A673 (cell line): ENCODE measurements at regions of chr11 and their contacts with region 1.

Region 1: DNA sequence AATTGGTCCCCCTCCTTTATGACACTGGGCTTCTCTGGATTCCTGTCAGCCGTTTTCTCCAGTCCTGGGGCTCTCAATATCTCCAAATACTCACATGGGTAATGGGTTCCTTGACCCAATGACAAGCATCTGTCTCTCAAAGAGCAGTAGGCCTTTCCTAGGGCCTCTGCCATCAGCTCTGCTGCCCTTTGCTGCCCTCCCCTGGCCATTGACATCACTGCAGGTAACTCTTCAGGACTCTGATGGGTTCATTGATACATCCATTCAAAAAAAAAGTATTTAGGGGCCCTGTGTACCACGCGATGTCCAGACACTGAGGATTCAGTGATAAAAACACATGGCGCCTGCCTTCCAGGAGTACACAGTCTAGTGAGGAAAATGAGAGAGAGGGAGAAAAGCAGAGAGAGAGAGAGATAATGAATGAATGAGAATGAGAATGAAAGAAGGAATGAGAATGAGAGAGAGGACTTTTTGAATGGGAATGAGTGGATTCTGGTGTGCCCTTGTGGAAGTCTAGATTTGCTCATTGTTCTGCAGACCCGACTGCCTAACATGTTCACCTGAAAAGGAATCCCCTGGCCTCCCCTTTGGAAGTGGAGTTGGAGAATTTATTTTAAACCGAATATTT is 42.6 kb upstream of the OLFML1 start:
- DNase-seq: peak; percentile 62
- H3K4me3 ChIP-seq: no peak overlapping the region
- H3K27ac ChIP-seq: no peak overlapping the region
- H3K4me1 ChIP-seq: no peaks in the 10 kb centered on the region
- H3K27me3 ChIP-seq: no peaks in the 10 kb centered on the region
- CTCF ChIP-seq: peak; percentile 78

Region 2: GRCh38 chr11:7098235-7098832 is 344.4 kb before region 1 on chr11:
- CTCF ChIA-PET with region 1: interaction called, 3 read pairs
- POLR2A ChIA-PET with region 1: no interaction called
- intact Hi-C with region 1: loop called (anchors 1 kb)
- DNase-seq: peak; percentile 49
- H3K4me3 ChIP-seq: no peak overlapping the region
- H3K27ac ChIP-seq: no peak overlapping the region
- H3K4me1 ChIP-seq: no peaks in the 10 kb centered on the region
- H3K27me3 ChIP-seq: peaks cover 12% of the 10 kb centered on the region
- CTCF ChIP-seq: peak; percentile 62

Region 3: DNA sequence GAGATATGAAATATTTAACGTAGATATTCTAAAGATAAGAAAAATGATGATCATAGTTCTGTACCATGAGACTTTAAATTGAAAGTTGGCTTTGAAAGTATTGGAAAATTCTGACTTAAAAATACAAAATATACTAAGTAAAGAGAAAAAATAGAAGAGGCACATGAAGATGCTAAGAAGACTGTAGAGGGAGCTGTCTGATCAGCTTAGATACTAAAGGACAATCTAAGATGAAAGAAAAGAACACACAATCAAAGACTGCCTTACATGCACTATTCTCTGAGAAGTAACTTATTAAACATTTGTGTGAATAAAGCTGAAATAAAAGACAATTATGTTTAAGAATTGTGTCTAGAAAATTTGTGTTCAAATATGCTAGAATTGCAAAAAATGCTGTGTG is 298.8 kb before region 1 on chr11:
- CTCF ChIA-PET with region 1: no interaction called
- POLR2A ChIA-PET with region 1: no interaction called
- intact Hi-C with region 1: loop called (anchors 5 kb)
- DNase-seq: peak; percentile 8
- H3K4me3 ChIP-seq: no peak overlapping the region
- H3K27ac ChIP-seq: no peak overlapping the region
- H3K4me1 ChIP-seq: no peaks in the 10 kb centered on the region
- H3K27me3 ChIP-seq: peaks cover 4% of the 10 kb centered on the region
- CTCF ChIP-seq: peak; percentile 43

Region 4: DNA sequence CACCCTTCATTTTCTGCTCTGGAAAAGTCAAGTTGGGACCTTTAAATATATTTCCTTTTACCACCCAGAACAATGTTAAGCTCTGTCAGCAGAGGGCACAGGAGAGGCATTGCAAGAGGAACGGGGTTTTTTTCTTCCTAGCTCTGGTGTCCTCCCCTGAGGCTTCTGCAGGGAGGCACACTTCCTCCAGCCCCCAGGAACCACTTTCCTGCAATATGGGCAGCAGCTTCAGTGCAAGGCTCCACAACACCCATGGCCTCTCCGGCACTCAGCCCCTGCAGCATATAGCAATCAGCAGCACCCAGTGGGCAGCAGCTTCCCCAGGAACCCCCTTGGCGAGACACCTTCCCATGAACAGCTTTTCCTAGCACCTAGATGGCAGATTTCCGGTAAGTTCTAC is 89.6 kb before region 1 on chr11:
- CTCF ChIA-PET with region 1: interaction called, 3 read pairs
- POLR2A ChIA-PET with region 1: no interaction called
- intact Hi-C with region 1: loop called (anchors 5 kb)
- DNase-seq: peak; percentile 40
- H3K4me3 ChIP-seq: no peak overlapping the region
- H3K27ac ChIP-seq: no peak overlapping the region
- H3K4me1 ChIP-seq: no peaks in the 10 kb centered on the region
- H3K27me3 ChIP-seq: no peaks in the 10 kb centered on the region
- CTCF ChIP-seq: peak; percentile 50

Region 5: GRCh38 chr11:7672960-7673723 is 230.4 kb after region 1 on chr11 and contains the start of gene CYB5R2:
- CTCF ChIA-PET with region 1: no interaction called
- POLR2A ChIA-PET with region 1: no interaction called
- intact Hi-C with region 1: no loop called
- DNase-seq: no peak
- H3K4me3 ChIP-seq: peak within 1 kb of the TSS; percentile 17
- H3K27ac ChIP-seq: no peak within 1 kb of the TSS
- H3K4me1 ChIP-seq: no peaks in the 10 kb centered on the region
- H3K27me3 ChIP-seq: peaks cover 22% of the 10 kb centered on the region
- CTCF ChIP-seq: no peak
- total RNA-seq, gene CYB5R2: 6.2 and 6.9 TPM in 2 replicates